Kidney (tissue), 22 donors: ENCODE measurements at regions of chr11 and their contacts with region 1.

Region 1: GRCh38 chr11:32792948-32793475 is 1.4 kb downstream of the CCDC73 start:
- DNase-seq: peak in 4 of 5 donors; percentile 61 to 83 (median 72)
- H3K4me3 ChIP-seq: peak overlapping the region in 2 of 3 donors; percentile 48 to 65
- H3K27ac ChIP-seq: no peak overlapping the region
- H3K4me1 ChIP-seq: no peaks in the 10 kb centered on the region
- H3K27me3 ChIP-seq: no peaks in the 10 kb centered on the region
- CTCF ChIP-seq: peak; percentile 78

Region 2: GRCh38 chr11:32326522-32326921 is 466.5 kb before region 1 on chr11:
- intact Hi-C with region 1: loop called (anchors 10 kb)
- DNase-seq: no peak
- H3K4me3 ChIP-seq: no peak overlapping the region
- H3K27ac ChIP-seq: no peak overlapping the region
- H3K4me1 ChIP-seq: no peaks in the 10 kb centered on the region
- H3K27me3 ChIP-seq: no peaks in the 10 kb centered on the region
- CTCF ChIP-seq: no peak

Region 3: DNA sequence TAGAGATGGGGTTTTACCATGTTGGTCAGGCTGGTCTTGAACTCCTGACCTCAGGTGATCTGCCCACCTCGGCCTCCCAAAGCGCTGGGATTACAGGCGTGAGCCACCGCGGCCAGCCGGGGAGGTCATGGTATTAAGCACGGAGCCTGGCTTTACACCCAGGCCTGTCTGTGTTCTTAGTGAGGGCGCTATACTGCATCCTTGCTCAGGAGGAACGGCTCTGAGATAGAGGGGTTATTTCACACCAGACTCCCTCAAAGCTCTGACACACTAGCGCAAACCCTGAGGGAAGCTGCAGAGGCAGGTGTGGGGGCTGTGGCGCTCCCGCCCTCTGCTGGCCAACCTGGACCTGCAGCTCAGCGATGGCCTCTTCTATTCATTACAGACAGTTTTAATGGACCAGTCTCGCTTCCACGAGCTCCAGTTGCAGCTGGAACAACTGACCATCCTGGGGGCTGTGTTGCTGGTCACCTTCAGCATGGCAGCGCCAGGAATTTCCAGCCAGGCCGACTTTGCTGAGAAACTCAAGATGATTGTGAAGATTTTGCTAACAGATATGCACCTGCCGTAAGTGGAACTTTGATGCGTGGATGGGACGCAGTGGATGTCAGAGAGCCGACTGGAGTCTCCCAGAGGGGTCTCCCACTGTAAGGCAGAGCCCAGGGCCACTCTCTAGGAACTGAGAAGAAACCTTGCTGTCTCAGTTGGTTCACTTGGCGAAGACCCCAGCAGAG is 272.6 kb after region 1 on chr11:
- intact Hi-C with region 1: no loop called
- DNase-seq: peak; percentile 79 to 83 (median 83)
- H3K4me3 ChIP-seq: no peak overlapping the region
- H3K27ac ChIP-seq: no peak overlapping the region
- H3K4me1 ChIP-seq: no peaks in the 10 kb centered on the region
- H3K27me3 ChIP-seq: no peaks in the 10 kb centered on the region
- CTCF ChIP-seq: peak; percentile 83

Region 4: GRCh38 chr11:33125611-33126010 is 332.6 kb after region 1 on chr11:
- intact Hi-C with region 1: no loop called
- DNase-seq: no peak
- H3K4me3 ChIP-seq: no peak overlapping the region
- H3K27ac ChIP-seq: no peak overlapping the region
- H3K4me1 ChIP-seq: no peaks in the 10 kb centered on the region
- H3K27me3 ChIP-seq: no peaks in the 10 kb centered on the region
- CTCF ChIP-seq: no peak